ENCODE measurements at regions of chr21 and their contacts with region 1.

Region 1: DNA sequence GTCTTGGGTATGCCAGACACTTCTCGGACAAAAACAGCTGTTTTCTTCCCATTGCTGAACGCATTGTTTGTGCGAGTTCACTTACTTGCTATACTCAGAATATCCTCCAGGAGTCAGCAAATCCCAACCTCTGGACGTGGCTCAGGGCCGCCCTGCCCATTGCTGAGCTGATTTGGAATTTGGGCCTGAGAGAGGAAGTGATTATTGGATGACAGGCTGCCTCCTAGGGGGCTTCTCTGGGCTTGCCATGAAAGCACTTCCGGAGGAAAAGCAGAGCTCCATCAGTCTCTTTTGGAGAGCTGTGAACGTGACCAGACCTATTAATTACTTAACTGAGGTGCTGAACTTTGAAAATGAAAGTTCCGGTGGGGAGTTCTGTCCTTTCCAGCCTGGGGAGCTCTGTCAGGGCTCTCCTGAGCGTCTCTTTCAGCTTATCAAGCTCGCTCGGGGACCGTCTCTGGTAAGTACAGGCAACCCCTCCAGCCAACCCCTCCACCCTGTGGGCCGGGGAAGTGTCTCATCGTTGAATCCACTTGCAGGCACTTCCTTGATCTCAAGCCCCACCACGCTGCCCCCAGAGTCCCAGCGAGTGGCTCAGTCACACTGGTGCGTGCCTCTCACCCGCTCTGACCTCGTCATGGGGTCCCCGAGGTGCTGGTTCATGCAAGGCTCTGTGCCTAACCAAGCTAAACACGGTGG is 76.9 kb downstream of the CLIC6 start:
- DNase-seq: peak; percentile 56 to 73 (median 62)
- ATAC-seq: peak; percentile 92
- H3K4me3 ChIP-seq: no peak overlapping the region
- H3K4me1 ChIP-seq: peaks cover 6% of the 10 kb centered on the region
- CTCF ChIP-seq: peak; percentile 73

Region 2: GRCh38 chr21:34874684-34875513 is 129.2 kb after region 1 on chr21:
- intact Hi-C with region 1: loop called in 1 of 2 experiments (anchors 10 kb)
- DNase-seq: no peak
- ATAC-seq: no peak
- H3K4me3 ChIP-seq: no peak overlapping the region
- H3K4me1 ChIP-seq: peaks cover 10% of the 10 kb centered on the region
- CTCF ChIP-seq: no peak

Region 3: GRCh38 chr21:34933609-34934335 is 188.1 kb after region 1 on chr21:
- intact Hi-C with region 1: no loop called
- DNase-seq: no peak
- ATAC-seq: peak; percentile 90
- H3K4me3 ChIP-seq: no peak overlapping the region
- H3K4me1 ChIP-seq: no peaks in the 10 kb centered on the region
- CTCF ChIP-seq: no peak

Region 4: DNA sequence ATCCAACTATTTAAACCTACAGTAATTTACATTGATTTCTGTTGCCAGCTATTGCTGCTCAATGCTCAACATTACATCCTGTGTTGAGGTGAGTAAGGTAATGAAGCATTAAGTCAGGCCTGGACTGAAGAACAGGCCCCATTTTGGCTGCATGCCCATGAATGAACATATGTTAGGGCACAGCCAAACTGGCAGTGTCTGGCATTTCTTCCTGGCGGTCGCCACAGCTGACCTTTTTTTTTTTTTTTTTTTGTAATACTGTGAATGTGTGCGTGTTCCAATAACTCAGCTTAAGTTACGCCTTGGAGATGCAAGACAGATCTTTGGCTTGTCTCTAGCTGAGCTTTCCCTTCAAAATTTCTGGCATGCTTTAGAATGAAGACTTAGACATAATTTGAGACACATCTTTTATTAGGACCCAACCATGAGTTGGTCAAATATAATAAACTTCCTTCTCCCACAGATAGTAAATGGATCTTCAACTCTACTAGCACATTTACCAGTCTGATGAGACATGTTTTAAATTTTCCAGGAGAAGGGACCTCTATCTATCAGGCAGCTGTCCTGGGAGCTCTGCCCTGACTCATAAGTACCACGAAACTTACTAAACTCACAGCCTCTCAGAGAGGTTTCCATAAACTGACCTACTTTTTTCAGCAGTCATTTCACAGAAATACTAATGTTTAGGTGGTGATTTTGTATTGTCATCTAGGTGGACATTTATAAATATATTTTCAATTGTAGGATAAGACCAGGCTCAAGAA is 644.5 kb after region 1 on chr21:
- intact Hi-C with region 1: loop called in 1 of 2 experiments (anchors 10 kb)
- DNase-seq: no peak
- ATAC-seq: no peak
- H3K4me3 ChIP-seq: no peak overlapping the region
- H3K4me1 ChIP-seq: no peaks in the 10 kb centered on the region
- CTCF ChIP-seq: no peak

Measured in mucosa of descending colon (tissue), 3 donors.